Ovary (tissue), 10 donors: ENCODE measurements at regions of chr13 and their contacts with region 1.

Region 1: DNA sequence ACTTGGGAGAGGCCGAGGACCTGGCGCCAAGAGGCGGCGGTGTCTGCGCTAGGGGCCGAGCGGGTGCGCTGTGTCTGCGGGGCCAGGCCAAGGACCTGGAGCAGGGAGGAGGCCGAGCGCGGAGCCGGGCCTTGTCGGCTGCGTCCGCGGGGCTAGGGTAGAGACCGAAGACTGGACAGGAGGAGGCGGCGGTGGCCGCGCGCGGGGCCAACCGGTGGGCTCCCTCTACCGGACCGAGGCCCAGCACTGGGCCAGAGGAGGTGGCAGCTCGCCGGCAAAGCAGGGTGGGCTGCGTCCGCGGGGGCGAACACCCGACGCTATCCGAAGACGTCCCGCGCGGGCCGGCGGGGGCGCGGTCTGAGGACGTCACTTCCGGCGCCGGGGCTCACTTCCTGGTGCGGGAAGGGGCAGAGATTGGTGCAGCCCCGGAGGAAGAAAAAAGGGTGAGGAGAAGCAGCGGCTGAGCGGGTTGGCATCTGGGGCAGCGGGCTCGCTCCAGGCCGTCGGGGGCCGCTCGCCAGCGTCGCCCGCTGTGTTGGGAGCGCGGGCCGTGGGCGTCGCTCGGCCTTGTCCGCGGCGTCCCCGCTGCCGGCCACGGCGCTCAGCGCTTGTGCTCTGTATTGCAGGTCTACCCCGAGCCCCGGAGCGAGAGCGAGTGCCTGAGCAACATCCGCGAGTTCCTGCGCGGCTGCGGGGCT is 38.3 kb downstream of the ARHGEF7 start:
- DNase-seq: peak; percentile 92 to 97 (median 94)
- H3K4me3 ChIP-seq: peak overlapping the region; percentile 96
- H3K27ac ChIP-seq: peak overlapping the region; percentile 87 to 97
- H3K4me1 ChIP-seq: peaks cover 7% of the 10 kb centered on the region
- H3K27me3 ChIP-seq: no peaks in the 10 kb centered on the region
- CTCF ChIP-seq: peak in 2 of 3 donors; percentile 10 to 41
- EP300 ChIP-seq: peak; percentile 28
- POLR2A ChIP-seq: peak; percentile 94

Region 2: DNA sequence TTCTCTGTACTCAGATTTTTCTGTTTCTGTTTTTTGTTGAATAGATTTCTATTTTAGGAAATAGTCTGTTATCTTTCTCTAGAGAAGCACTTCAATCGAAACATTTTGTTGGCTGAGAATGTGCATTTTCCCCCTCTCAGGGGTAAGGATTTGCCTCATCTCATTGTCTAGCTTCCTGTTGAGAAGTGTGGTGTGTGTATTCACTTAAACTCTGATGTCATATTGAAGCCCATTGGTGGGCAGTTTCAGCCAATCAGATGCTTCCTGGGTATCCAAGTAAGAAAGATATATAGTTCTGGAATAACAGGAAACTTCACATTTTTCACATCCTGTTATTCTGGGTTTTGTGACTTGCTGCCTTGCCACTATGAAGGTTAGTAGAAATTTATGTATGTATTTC is 49.3 kb after region 1 on chr13:
- intact Hi-C with region 1: loop called in 1 of 4 experiments (anchors 10 kb)
- DNase-seq: peak in 1 of 5 donors; percentile 63
- H3K4me3 ChIP-seq: no peak overlapping the region
- H3K27ac ChIP-seq: peak overlapping the region in 1 of 2 donors; percentile 6
- H3K4me1 ChIP-seq: peaks cover 18% of the 10 kb centered on the region
- H3K27me3 ChIP-seq: no peaks in the 10 kb centered on the region
- CTCF ChIP-seq: no peak
- EP300 ChIP-seq: no peak
- POLR2A ChIP-seq: no peak

Region 3: GRCh38 chr13:111228262-111229144 is 75.1 kb after region 1 on chr13:
- intact Hi-C with region 1: no loop called
- DNase-seq: no peak
- H3K4me3 ChIP-seq: no peak overlapping the region
- H3K27ac ChIP-seq: no peak overlapping the region
- H3K4me1 ChIP-seq: peaks cover 6% of the 10 kb centered on the region
- H3K27me3 ChIP-seq: no peaks in the 10 kb centered on the region
- CTCF ChIP-seq: no peak
- EP300 ChIP-seq: no peak
- POLR2A ChIP-seq: no peak